AG04449 (cell line): ENCODE measurements at regions of chr12 and their contacts with region 1.

Region 1: GRCh38 chr12:54201001-54201794 is 12.4 kb upstream of the SMUG1 start:
- DNase-seq: no peak
- H3K4me3 ChIP-seq: no peak overlapping the region
- CTCF ChIP-seq: peak; percentile 98

Region 2: DNA sequence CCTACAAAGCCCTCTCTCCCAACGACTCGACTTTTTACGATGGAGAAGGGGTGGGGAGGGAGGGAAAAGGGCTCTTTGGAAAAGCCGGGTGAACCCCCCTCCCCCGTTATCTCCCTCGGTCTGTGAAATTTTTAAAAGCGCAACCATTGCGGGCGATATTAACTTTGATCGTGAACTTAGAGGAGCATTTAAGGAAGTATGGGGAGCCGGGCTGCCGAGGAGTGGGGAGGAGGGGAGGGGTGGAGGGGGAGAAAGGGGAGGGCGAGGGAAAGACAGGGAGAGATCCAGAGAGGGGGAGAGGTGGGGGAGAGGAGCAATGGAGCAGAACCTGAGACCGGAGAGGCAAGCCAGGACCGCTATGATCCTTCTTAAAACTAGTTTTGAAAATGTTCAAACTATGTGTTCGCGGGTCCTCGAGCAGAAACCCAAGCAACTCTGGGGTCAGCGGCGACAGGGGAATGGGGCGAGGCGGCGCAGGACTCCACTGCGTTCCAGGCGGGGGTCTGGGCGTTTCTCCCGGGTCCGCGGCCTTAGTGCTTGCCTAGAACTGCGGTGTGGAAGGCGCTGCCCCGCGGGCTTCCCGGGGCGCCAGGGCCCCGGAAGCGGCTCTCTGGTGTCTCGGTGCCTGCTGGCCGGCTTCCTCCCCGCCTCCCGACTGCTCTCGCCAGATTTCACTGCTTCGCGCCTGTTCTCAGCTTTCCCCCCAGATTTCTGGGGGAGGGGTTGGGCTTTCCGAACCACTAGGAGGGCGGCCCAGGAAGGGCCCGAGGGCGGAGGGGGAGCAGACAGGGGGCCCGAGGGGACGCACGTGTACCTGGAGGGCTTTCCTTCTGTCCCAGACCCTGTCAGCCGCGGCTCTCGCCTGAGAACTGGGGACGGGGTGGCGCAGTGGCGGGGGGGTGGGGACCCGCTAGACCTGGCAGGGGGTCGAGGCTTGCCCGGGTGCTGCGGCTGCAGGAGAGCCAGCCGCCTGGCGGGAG is 226.8 kb before region 1 on chr12 and contains the start of gene HOTAIR:
- CTCF ChIA-PET with region 1: interaction called, 19 read pairs
- POLR2A ChIA-PET with region 1: interaction called, 10 read pairs
- DNase-seq: no peak
- H3K4me3 ChIP-seq: peak within 1 kb of the TSS; percentile 76
- CTCF ChIP-seq: no peak

Region 3: DNA sequence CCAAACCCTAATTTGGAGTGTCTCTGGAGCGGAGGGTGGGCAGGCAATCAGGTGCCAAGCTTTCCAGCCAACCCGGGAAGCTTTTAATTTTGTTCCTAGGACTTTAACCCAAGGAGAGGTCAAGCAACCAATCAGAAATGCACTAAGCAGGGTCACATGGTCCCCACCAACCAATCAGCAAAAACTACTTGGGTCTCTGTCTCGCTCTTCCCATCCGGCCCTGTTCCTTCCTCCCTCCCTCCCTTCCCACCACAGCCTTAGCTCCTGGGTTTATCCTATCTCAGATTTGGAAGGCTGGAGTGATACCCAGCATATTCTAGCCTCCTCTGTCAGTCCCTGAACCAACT is 161.1 kb before region 1 on chr12:
- CTCF ChIA-PET with region 1: interaction called, 908 read pairs
- POLR2A ChIA-PET with region 1: no interaction called
- DNase-seq: no peak
- H3K4me3 ChIP-seq: no peak overlapping the region
- CTCF ChIP-seq: no peak